ENCODE measurements at regions of chr17 and their contacts with region 1.

Region 1: DNA sequence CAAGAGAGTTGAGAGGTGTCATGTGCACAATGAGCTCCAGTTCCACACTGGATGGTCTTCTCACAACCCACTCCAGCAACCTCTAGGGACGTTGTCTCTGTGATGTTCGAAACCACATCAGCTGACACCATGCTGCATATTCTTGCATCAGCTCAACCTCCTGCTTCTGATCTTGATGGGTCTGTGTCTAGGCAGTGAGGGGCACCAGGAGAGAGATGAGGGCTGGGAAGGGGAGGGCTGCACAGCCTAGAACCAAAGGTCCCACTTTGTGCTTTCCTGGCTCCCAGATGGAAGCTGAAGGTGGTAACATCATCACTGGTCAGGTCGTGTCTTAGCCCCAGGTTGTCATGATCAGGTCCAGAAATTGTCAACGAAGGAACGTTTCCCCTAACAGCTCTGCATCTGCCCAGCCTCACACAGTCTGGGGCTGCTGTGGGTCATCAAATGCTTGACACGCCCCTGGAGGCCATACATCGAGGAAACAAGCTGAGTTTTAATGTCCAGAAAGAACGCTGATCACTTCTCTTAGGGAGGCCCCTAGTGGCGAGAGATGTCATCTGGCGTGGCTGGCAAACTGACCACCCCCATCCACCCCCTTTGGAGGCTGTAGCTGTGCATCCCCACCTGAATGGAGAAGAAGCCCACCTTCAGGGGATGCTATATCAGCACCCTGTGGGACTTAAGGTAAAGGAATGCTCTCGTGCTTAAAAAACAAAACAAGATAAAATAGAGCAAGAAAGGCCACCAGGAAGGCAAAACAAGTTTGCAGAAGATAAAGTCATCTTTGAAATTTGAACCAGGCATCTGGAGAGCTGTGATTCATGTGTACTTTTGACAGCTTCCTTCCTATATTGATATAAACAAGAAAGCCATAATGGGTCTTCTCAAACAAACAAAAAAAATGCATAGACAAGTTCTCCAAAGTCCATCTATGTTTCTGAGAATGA is 58.3 kb downstream of the WIPI1 start:
- DNase-seq: peak; percentile 64
- ATAC-seq: peak; percentile 65
- H3K4me3 Mint-ChIP-seq: peak overlapping the region; percentile 43
- H3K27ac Mint-ChIP-seq: peak overlapping the region; percentile 96
- H3K4me1 Mint-ChIP-seq: peaks cover 39% of the 10 kb centered on the region
- H3K27me3 Mint-ChIP-seq: no peaks in the 10 kb centered on the region

Region 2: DNA sequence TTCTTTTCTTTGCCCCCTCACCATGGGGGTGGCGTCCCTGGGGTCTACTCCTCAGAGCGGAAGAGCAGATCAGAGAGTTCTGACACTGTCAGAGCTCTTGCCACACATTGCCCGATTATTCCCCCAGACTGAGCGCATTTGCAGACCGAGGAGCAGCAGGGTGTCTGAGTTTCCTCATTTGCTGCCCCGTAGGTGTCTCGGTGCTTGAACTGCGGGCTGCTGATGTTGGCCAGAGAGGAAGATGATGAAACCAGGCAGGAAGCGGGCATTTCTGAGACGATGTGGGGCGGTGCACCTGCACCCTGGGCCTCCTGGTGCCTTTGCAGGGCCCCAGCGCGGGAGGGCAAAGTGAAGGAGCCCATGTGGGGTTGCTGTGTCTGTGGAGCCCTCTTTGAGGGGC is 52.5 kb before region 1 on chr17:
- CTCF ChIA-PET with region 1: interaction called, 23 read pairs
- POLR2A ChIA-PET with region 1: interaction called, 4 read pairs
- DNase-seq: peak; percentile 88
- ATAC-seq: peak; percentile 81
- H3K4me3 Mint-ChIP-seq: peak overlapping the region; percentile 77
- H3K27ac Mint-ChIP-seq: peak overlapping the region; percentile 100
- H3K4me1 Mint-ChIP-seq: peaks cover 77% of the 10 kb centered on the region
- H3K27me3 Mint-ChIP-seq: no peaks in the 10 kb centered on the region

Region 3: GRCh38 chr17:68381076-68381900 is 17.7 kb before region 1 on chr17:
- CTCF ChIA-PET with region 1: interaction called, 20 read pairs
- POLR2A ChIA-PET with region 1: no interaction called
- DNase-seq: no peak
- ATAC-seq: no peak
- H3K4me3 Mint-ChIP-seq: no peak overlapping the region
- H3K27ac Mint-ChIP-seq: no peak overlapping the region
- H3K4me1 Mint-ChIP-seq: peaks cover 34% of the 10 kb centered on the region
- H3K27me3 Mint-ChIP-seq: no peaks in the 10 kb centered on the region

Region 4: GRCh38 chr17:68428498-68429170 is 29.7 kb after region 1 on chr17:
- CTCF ChIA-PET with region 1: interaction called, 29 read pairs
- POLR2A ChIA-PET with region 1: no interaction called
- DNase-seq: no peak
- ATAC-seq: no peak
- H3K4me3 Mint-ChIP-seq: no peak overlapping the region
- H3K27ac Mint-ChIP-seq: no peak overlapping the region
- H3K4me1 Mint-ChIP-seq: peaks cover 6% of the 10 kb centered on the region
- H3K27me3 Mint-ChIP-seq: no peaks in the 10 kb centered on the region

Measured in activated CD8-positive, alpha-beta T cell treated with anti-CD3 and anti-CD28 coated beads, Interleukin-2, amount 10 ng/mL, durations not matched to agents 7 days and 5 days (primary cell).